Heart right ventricle (tissue), 16 donors: ENCODE measurements at regions of chrX and their contacts with region 1.

Region 1: GRCh38 chrX:85544609-85545008 is 165.1 kb upstream of the POF1B start:
- DNase-seq: no peak
- ATAC-seq: no peak
- H3K4me3 ChIP-seq: peak overlapping the region in 1 of 10 donors; percentile 14
- H3K27ac ChIP-seq: no peak overlapping the region
- H3K4me1 ChIP-seq: peaks cover 0 to 5% (median 0%) of the 10 kb centered on the region in 9 donors
- H3K27me3 ChIP-seq: no peaks in the 10 kb centered on the region
- CTCF ChIP-seq: peak in 8 of 9 donors; percentile 21 to 62 (median 44)

Region 2: DNA sequence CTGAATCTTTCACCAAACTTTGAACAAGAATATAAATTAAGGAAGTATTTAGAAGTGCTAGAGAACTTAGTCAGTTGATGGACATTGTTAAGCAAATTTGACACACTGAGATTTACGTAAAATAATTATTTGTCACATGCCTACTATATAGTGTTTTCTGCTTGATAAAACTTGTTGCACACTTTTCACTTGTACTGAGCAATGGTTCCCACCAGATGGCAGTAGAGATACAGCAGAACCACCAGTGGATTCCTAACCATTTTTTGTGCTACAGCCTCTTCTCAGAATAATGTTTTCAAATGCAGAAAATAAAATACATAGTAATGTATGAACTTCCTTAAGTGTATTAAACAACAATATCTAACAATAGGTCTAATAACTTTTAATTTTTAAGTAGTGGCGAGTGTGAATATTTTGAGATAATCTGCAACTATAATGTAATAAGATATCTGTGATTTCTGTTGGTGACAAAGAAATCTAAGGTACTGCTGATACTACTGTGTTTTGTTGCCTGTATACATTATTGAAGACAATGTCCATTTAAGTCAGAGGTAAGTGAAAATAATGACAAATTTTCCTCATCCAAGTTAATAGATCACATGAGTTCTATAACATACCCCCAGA is 459.7 kb before region 1 on chrX:
- intact Hi-C with region 1: loop called in 1 of 10 experiments (anchors 10 kb)
- DNase-seq: no peak
- ATAC-seq: no peak
- H3K4me3 ChIP-seq: no peak overlapping the region
- H3K27ac ChIP-seq: no peak overlapping the region
- H3K4me1 ChIP-seq: peaks cover 0 to 6% (median 0%) of the 10 kb centered on the region in 9 donors
- H3K27me3 ChIP-seq: no peaks in the 10 kb centered on the region
- CTCF ChIP-seq: peak; percentile 41 to 88 (median 66)

Region 3: GRCh38 chrX:85111347-85111746 is 433.3 kb before region 1 on chrX:
- intact Hi-C with region 1: loop called in 9 of 10 experiments (anchors 5 to 10 kb)
- DNase-seq: no peak
- ATAC-seq: no peak
- H3K4me3 ChIP-seq: no peak overlapping the region
- H3K27ac ChIP-seq: no peak overlapping the region
- H3K4me1 ChIP-seq: no peaks in the 10 kb centered on the region
- H3K27me3 ChIP-seq: peaks cover 0 to 7% (median 0%) of the 10 kb centered on the region in 7 donors
- CTCF ChIP-seq: peak; percentile 30 to 73 (median 53)

Region 4: GRCh38 chrX:85815203-85815751 is 270.7 kb after region 1 on chrX:
- intact Hi-C with region 1: no loop called
- DNase-seq: no peak
- ATAC-seq: no peak
- H3K4me3 ChIP-seq: no peak overlapping the region
- H3K27ac ChIP-seq: no peak overlapping the region
- H3K4me1 ChIP-seq: no peaks in the 10 kb centered on the region
- H3K27me3 ChIP-seq: peaks cover 0 to 7% (median 0%) of the 10 kb centered on the region in 7 donors
- CTCF ChIP-seq: no peak